ENCODE measurements at regions of chr19 and their contacts with region 1.

Region 1: DNA sequence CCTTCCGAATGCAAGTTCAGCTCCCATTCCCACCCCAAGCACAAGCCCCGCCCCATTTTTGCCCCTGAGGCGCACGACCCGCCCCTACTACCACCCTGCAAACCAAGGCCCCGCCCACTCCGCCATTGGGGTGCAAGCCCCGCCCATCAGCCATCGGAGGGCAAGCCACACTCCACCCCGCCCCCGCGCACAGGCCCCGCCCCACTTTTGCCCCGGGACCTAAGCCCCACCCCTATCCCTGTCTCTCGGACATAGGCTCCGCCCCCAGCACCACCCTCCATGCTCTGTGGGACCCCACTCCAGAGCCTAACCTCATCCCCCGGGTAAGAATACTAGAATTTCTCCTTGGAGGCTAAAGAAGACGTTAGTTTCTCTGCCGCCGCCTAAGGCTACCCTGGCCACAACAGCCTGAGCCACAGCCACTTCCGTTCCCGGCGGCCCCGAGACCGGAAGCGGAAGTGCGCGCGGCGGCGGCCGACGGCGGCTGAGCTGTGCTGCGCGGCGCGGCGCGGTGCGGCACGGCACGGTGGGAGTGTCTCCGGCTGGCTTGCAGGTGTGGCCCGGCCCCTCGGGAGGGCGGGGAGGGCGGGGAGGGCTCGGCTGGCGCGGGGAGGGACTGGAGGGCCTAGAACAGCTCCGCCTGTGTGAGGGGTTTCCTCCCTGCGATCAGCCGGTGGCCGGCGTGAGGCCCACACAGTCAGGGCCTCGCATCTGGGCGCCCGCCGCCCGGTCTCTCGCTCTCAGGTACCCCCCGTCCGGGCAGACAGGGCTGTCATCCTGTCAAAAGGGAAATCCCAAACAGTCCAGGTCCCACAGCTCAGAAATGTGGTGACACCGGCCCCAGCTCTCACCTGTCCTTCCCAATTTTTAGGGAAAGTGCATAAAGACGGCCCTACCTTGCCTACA is at the start of gene ZNF333:
- DNase-seq: peak; percentile 89 to 99
- H3K4me3 ChIP-seq: peak within 1 kb of the TSS; percentile 52
- CTCF ChIP-seq: no peak
- POLR2A ChIP-seq: no peak
- total RNA-seq, gene ZNF333: 14.0 to 26.8 (median 16.6) TPM

Region 2: DNA sequence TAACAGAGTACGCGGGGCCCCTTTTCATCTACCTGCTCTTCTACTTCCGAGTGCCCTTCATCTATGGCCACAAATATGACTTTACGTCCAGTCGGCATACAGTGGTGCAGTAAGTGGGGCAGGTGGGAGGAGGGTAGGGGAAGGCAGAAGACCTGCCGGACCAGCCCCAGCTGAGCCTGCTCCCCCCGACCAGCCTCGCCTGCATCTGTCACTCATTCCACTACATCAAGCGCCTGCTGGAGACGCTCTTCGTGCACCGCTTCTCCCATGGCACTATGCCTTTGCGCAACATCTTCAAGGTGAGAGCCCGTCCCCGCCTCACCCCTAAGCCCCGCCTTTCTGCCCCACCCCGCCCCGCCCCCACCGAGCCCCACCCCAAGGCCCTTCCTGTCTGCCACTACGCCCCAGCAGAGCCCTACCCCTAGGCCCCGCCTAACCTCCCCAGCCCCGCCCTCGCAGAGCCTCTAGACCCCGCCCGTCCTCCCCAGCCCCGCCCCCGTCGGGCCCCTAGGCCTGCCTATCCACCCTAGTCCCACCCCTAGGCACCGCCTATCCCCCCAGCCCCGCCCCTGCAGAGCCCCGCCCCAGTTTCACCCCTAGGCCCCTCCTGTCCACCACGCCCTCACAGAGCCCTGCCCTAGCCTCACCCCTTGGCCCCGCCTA is 125.7 kb before region 1 on chr19:
- intact Hi-C with region 1: loop called (anchors 10 kb)
- DNase-seq: peak in 1 of 2 donors; percentile 71
- H3K4me3 ChIP-seq: no peak overlapping the region
- CTCF ChIP-seq: no peak
- POLR2A ChIP-seq: no peak